Thyroid gland (tissue), 4 donors: ENCODE measurements at regions of chr9 and their contacts with region 1.

Region 1: DNA sequence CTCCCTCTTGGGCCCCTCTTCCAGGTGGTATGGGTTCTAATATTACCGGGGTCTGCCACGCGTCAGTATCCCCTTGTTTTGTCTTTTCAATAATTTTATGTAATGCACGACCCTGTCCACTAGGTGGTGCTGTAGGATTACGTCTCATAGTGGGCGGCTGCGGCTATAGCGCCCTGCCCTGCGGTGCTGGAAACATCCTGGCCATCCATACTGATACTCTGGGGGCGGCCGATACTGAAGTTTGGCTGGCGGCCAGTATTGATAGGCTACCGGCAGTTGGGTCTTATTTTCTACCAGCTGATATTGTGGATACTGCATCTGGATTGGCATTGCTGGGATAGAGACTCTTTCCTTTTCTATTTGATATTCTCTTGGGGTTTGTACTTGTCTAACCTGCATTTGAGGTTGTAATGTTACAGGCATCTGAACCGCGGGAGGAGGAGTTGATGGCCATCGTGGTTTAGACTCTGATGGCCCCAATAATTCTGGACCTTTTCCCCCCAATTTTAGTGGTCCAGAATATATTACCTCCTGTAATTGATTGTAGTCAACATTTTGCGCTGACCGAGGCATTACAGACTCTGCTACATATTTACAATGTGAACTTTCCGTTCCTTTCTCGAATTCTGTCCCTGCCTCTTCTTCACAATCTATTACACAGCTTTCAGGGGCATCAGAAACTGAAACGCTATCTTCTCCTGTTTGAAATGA is 3.3 kb upstream of the TMEM141 start:
- DNase-seq: peak; percentile 52 to 56
- H3K4me3 ChIP-seq: no peak overlapping the region
- H3K27ac ChIP-seq: no peak overlapping the region
- H3K4me1 ChIP-seq: peaks cover 13 to 32% of the 10 kb centered on the region in 2 donors
- H3K27me3 ChIP-seq: no peaks in the 10 kb centered on the region
- CTCF ChIP-seq: peak; percentile 65 to 86 (median 82)
- POLR2A ChIP-seq: no peak

Region 2: GRCh38 chr9:136686794-136687711 is 100.8 kb before region 1 on chr9 and contains the start of gene AGPAT2:
- intact Hi-C with region 1: no loop called
- DNase-seq: peak; percentile 83 to 85
- H3K4me3 ChIP-seq: peak within 1 kb of the TSS; percentile 53 to 84 (median 65)
- H3K27ac ChIP-seq: peak within 1 kb of the TSS; percentile 56 to 86 (median 83)
- H3K4me1 ChIP-seq: peaks cover 37 to 66% of the 10 kb centered on the region in 2 donors
- H3K27me3 ChIP-seq: no peaks in the 10 kb centered on the region
- CTCF ChIP-seq: peak in 1 of 6 experiments; percentile 12
- POLR2A ChIP-seq: peak; percentile 21 to 73
- total RNA-seq, gene AGPAT2: 58.6 to 78.7 (median 72.0) TPM

Region 3: DNA sequence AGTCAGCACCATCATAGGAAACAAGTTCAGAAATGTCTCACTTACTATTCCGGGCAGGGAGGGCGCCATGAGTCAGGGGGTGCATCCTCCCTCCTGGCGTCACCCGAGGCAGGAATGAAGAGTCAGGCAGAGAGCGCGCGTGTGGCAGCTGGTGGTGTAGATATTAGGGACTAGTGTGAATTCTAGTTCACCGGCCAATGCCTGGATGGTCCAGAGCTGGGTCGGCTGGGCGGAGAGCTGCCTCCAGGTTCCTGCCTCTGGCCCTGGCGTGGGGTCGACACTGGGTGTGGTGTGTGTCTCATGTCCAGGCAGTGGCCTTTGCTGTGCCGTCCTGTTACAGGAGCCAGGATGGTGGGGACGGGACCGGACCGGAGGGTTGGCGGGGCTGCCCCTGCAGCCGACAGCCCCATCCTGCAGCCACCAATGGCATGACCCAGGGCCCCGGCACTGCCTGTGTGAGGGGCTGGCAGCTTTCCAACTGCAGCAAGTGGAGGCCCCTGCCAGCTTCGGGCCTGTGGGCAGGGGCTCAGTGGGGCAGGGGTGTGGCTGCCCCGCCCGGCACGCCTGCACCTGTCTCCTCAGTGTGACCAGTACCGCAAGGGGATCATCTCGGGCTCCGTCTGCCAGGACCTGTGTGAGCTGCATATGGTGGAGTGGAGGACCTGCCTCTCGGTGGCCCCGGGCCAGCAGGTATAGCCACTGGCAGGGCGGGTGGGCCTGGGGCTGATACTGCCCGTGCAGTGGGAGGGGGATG is 66.3 kb before region 1 on chr9:
- intact Hi-C with region 1: no loop called
- DNase-seq: no peak
- H3K4me3 ChIP-seq: no peak overlapping the region
- H3K27ac ChIP-seq: no peak overlapping the region
- H3K4me1 ChIP-seq: peaks cover 8 to 39% of the 10 kb centered on the region in 2 donors
- H3K27me3 ChIP-seq: no peaks in the 10 kb centered on the region
- CTCF ChIP-seq: no peak
- POLR2A ChIP-seq: peak in 1 of 2 donors; percentile 6

Region 4: DNA sequence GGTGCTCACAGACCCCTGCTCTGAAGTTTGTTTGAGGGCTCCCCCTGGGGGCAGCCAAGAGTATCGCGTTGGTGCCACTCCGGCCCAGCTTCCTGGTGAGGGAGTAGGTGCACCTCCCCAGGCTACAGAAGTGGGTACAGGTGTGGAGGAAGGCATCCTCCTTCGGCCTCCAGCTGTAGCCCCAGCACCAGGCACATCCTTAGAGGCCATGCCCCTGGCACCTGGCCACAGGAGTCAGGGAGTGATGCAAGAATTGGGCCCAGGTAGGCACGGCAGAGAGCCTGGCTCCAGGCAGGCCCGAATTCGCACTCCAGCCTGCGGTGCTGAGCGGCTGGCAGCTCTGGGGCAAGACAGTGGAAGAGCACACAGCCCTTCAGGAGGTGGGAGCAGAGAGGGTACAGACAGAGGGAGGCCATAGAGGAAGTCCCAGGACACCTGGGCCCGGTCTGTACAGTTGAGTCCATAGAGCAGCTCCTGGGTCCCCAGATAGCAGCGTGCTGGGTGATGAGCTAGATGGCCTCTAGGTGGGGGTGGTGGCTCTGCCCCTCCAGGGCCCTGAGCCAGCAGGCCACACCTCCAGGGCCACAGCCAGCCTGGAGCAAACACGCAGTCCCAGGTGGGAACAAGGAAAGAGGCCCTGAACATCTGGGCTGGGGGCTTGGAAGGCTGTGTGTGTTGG is 280.2 kb after region 1 on chr9:
- intact Hi-C with region 1: loop called (anchors 5 kb)
- DNase-seq: peak; percentile 74 to 79
- H3K4me3 ChIP-seq: no peak overlapping the region
- H3K27ac ChIP-seq: no peak overlapping the region
- H3K4me1 ChIP-seq: peaks cover 6 to 14% of the 10 kb centered on the region in 2 donors
- H3K27me3 ChIP-seq: no peaks in the 10 kb centered on the region
- CTCF ChIP-seq: peak; percentile 54 to 86 (median 71)
- POLR2A ChIP-seq: no peak